PC-3 (cell line): ENCODE measurements at regions of chr21 and their contacts with region 1.

Region 1: GRCh38 chr21:41684381-41685245 is 82.2 kb downstream of the RIPK4 start:
- DNase-seq: peak; percentile 86
- ATAC-seq: peak; percentile 70
- H3K4me3 ChIP-seq: peak overlapping the region; percentile 48
- H3K27ac ChIP-seq: peak overlapping the region; percentile 98
- H3K4me1 ChIP-seq: peaks cover 88% of the 10 kb centered on the region
- H3K27me3 ChIP-seq: no peaks in the 10 kb centered on the region
- CTCF ChIP-seq: no peak

Region 2: DNA sequence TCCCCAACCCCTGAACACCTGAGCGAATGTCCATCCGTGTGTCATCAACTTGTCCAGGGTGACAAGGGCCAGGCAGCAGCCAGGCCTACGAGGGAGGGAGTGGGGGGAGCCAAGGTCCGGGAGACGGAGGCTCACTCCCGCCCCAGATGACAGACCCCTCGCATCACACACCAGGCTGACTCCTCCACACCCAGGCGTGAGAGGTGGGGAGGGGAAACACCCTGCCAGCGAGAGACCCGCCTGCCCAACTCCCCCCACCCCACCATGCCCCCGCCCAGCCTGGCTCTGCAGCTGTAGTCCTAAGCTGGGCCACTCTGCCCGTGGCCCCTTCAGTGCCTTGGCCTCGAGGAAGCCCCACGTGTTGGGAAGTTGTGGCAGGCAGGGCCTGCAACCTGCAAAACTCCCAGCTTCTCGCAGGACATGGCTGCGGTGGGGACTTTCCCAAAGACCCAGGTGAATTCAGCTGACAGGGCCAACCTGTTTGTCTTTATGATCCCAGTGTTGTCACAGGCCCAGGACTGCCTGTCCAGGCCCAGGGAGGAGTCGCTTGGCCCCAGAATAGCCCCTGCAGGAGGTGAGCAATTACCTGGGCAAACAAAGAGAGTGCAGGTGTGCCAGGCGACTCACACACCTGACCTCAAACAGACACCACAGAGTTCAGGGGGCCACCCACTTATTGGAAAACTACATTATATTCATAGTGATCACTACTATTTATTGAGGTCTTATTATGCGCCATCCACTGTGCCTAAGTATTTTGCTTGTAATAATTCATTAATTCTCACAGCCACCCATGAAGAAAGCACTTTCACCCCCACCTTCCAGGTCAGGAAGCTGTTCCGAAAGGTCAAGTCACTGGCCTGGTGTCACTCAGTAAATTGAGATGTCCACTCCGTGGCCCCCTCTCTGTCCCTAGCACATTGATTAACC is 19.5 kb after region 1 on chr21:
- CTCF ChIA-PET with region 1: no interaction called
- POLR2A ChIA-PET with region 1: interaction called, 14 read pairs
- intact Hi-C with region 1: no loop called
- DNase-seq: peak; percentile 98
- ATAC-seq: peak; percentile 88
- H3K4me3 ChIP-seq: no peak overlapping the region
- H3K27ac ChIP-seq: peak overlapping the region; percentile 97
- H3K4me1 ChIP-seq: peaks cover 52% of the 10 kb centered on the region
- H3K27me3 ChIP-seq: no peaks in the 10 kb centered on the region
- CTCF ChIP-seq: no peak

Region 3: GRCh38 chr21:41715649-41716281 is 31.2 kb after region 1 on chr21:
- CTCF ChIA-PET with region 1: no interaction called
- POLR2A ChIA-PET with region 1: no interaction called
- intact Hi-C with region 1: loop called (anchors 5 kb)
- DNase-seq: peak; percentile 64
- ATAC-seq: peak; percentile 59
- H3K4me3 ChIP-seq: no peak overlapping the region
- H3K27ac ChIP-seq: peak overlapping the region; percentile 68
- H3K4me1 ChIP-seq: peaks cover 19% of the 10 kb centered on the region
- H3K27me3 ChIP-seq: no peaks in the 10 kb centered on the region
- CTCF ChIP-seq: no peak